Endothelial cell of umbilical vein (primary cell): ENCODE measurements at regions of chr12 and their contacts with region 1.

Region 1: GRCh38 chr12:29088611-29089219 is 60.4 kb upstream of the FAR2 start:
- DNase-seq: peak; percentile 53
- H3K4me3 ChIP-seq: no peak overlapping the region
- H3K27ac ChIP-seq: no peak overlapping the region
- H3K4me1 ChIP-seq: no peaks in the 10 kb centered on the region
- H3K27me3 ChIP-seq: peaks cover 0 to 5% of the 10 kb centered on the region in 2 experiments
- CTCF ChIP-seq: peak; percentile 31 to 33
- POLR2A ChIP-seq: no peak

Region 2: DNA sequence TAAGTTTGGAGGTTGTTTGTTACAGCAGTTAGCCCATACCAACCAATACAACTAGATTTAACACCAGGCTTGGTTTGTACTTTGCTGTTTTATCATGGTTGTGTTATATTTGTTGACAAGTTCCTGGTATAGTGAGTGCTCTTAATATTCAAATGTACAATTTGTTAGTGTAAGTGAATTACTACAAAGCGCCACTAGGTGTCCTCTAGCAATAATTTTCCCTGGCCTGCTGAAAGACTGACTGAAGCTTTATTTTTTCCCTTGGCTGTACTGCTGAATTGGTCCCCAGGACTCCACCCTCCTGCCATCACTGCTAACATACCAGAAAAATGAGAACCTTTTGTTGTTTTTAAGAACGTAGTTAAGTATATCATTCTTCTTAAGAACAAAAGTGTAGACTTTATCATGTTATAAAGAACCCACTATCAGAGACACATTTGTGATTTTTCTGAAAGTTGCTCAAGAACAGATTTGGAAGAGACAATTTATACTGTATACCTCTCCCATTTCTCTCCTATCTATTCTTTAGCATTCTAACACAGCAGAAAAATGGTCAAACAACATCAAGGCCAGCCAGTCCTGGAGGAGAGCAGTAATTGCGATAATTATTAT is 15.0 kb before region 1 on chr12:
- CTCF ChIA-PET with region 1: interaction called, 18 read pairs
- POLR2A ChIA-PET with region 1: no interaction called
- dilution Hi-C with region 1: no loop called
- intact Hi-C with region 1: no loop called
- DNase-seq: peak; percentile 67
- H3K4me3 ChIP-seq: no peak overlapping the region
- H3K27ac ChIP-seq: no peak overlapping the region
- H3K4me1 ChIP-seq: no peaks in the 10 kb centered on the region
- H3K27me3 ChIP-seq: peaks cover 2 to 12% of the 10 kb centered on the region in 2 experiments
- CTCF ChIP-seq: peak; percentile 51 to 55
- POLR2A ChIP-seq: no peak

Region 3: DNA sequence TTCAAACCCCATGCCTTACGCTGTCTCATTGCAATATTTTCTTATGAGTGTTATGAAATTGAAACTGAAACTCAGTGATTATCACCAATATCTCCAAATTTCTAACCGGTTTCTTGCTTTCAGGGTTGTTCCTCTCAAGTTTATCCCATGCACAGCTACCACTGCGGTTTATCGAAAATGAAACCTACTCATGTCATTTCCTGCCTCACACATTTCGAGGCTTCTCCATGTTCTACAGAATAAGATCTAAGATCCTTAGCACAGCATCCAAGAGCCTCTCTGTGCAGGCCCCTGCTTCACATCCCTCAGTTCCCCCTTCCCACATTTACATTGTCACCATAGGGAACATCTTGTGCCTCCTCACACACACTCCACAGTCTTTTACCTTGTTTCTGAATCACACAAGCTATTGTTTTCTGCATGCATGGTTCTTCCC is 14.8 kb after region 1 on chr12:
- CTCF ChIA-PET with region 1: interaction called, 22 read pairs
- POLR2A ChIA-PET with region 1: no interaction called
- dilution Hi-C with region 1: no loop called
- intact Hi-C with region 1: no loop called
- DNase-seq: no peak
- H3K4me3 ChIP-seq: no peak overlapping the region
- H3K27ac ChIP-seq: no peak overlapping the region
- H3K4me1 ChIP-seq: no peaks in the 10 kb centered on the region
- H3K27me3 ChIP-seq: no peaks in the 10 kb centered on the region
- CTCF ChIP-seq: no peak
- POLR2A ChIP-seq: no peak

Region 4: GRCh38 chr12:29309320-29309902 is 220.7 kb after region 1 on chr12:
- CTCF ChIA-PET with region 1: interaction called, 15 read pairs
- POLR2A ChIA-PET with region 1: no interaction called
- dilution Hi-C with region 1: no loop called
- intact Hi-C with region 1: no loop called
- DNase-seq: peak; percentile 8
- H3K4me3 ChIP-seq: no peak overlapping the region
- H3K27ac ChIP-seq: no peak overlapping the region
- H3K4me1 ChIP-seq: no peaks in the 10 kb centered on the region
- H3K27me3 ChIP-seq: no peaks in the 10 kb centered on the region
- CTCF ChIP-seq: peak; percentile 5 to 12
- POLR2A ChIP-seq: no peak

Region 5: GRCh38 chr12:29317556-29318363 is 229.0 kb after region 1 on chr12:
- CTCF ChIA-PET with region 1: interaction called, 52 read pairs
- POLR2A ChIA-PET with region 1: no interaction called
- dilution Hi-C with region 1: no loop called
- intact Hi-C with region 1: loop called (anchors 1 kb)
- DNase-seq: peak; percentile 72
- H3K4me3 ChIP-seq: no peak overlapping the region
- H3K27ac ChIP-seq: no peak overlapping the region
- H3K4me1 ChIP-seq: peaks cover 17% of the 10 kb centered on the region
- H3K27me3 ChIP-seq: no peaks in the 10 kb centered on the region
- CTCF ChIP-seq: peak; percentile 61 to 66
- POLR2A ChIP-seq: no peak